CD8-positive, alpha-beta memory T cell (primary cell): ENCODE measurements at regions of chr2 and their contacts with region 1.

Region 1: GRCh38 chr2:128027801-128028667 is at the start of gene SAP130:
- DNase-seq: peak; percentile 98 to 99 (median 98)
- H3K4me3 ChIP-seq: peak within 1 kb of the TSS; percentile 72
- H3K4me3 Mint-ChIP-seq: peak within 1 kb of the TSS; percentile 92 to 98 (median 97)
- H3K27ac ChIP-seq: peak within 1 kb of the TSS; percentile 79
- H3K27ac Mint-ChIP-seq: peak within 1 kb of the TSS; percentile 91 to 97 (median 96)
- H3K4me1 ChIP-seq: peaks cover 13% of the 10 kb centered on the region
- H3K4me1 Mint-ChIP-seq: peaks cover 23 to 35% (median 25%) of the 10 kb centered on the region in 3 donors
- H3K27me3 ChIP-seq: no peaks in the 10 kb centered on the region
- H3K27me3 Mint-ChIP-seq: peaks cover 0 to 4% of the 10 kb centered on the region in 2 donors
- total RNA-seq, gene SAP130: 22.3 to 22.9 TPM

Region 2: DNA sequence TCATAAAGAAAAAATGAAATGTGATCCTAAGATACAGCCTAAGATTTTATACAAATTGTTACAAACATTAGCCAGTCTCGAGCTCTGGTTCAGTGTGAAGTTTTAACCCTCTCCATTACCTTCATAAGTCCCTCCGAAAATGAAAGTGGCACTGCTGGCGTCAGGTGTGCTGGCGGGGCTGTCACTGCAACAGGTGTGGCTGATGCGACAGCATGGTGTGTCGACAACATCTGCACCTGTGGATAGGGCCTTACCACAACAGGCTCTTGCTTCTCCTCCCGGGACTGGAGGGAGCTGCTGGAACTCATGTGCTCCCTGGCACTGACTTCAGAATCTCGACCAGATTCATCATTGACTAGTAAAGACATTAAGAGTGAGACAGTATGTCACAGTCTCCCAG is 10.5 kb before region 1 on chr2:
- CTCF ChIA-PET with region 1: interaction called, 4 read pairs
- POLR2A ChIA-PET with region 1: interaction called, 11 read pairs
- DNase-seq: no peak
- H3K4me3 ChIP-seq: no peak overlapping the region
- H3K4me3 Mint-ChIP-seq: no peak overlapping the region
- H3K27ac ChIP-seq: no peak overlapping the region
- H3K27ac Mint-ChIP-seq: no peak overlapping the region
- H3K4me1 ChIP-seq: no peaks in the 10 kb centered on the region
- H3K4me1 Mint-ChIP-seq: peaks cover 5 to 7% (median 6%) of the 10 kb centered on the region in 3 donors
- H3K27me3 ChIP-seq: no peaks in the 10 kb centered on the region
- H3K27me3 Mint-ChIP-seq: no peaks in the 10 kb centered on the region

Region 3: DNA sequence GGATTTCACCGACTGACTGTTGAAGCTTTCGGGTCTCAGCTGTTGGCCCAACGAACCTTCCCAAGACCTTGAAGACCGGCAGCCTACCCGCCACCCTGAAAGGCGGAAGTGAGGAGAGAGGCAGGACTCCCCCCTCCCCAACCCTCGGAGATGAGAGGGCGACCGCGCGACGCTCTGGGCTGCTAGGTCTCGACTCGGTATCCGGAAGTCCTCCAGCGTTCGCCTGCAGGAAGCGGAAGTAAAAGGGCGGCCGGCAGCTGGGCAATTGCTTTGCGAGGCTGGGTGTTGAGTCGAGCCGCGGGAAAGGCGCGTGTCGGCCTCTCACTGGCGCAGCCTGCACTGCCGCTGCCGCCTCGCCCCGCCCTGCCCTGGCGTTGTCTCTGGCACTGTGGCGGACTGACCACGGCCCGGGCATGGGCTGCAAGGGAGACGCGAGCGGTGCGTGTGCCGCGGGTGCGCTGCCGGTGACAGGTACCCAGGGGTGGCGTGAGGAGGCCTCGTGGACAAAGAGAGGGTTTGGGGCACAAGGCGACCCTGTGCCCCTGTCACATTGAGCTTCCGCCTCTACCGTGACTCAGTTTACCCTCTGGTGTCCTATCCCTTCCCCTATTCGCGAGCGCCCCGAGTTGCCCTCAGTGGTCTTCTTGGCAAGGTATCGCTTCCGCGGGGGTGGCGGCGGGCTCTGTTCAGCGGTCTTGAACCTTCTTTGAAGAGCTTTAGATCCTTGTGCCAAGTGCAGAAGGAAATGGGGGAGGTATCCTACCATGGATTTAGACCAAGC is 63.1 kb after region 1 on chr2 and contains the start of gene UGGT1:
- CTCF ChIA-PET with region 1: interaction called, 5 read pairs
- POLR2A ChIA-PET with region 1: interaction called, 27 read pairs
- DNase-seq: peak; percentile 88 to 95 (median 91)
- H3K4me3 ChIP-seq: peak within 1 kb of the TSS; percentile 97
- H3K4me3 Mint-ChIP-seq: peak within 1 kb of the TSS; percentile 85 to 98 (median 92)
- H3K27ac ChIP-seq: peak within 1 kb of the TSS; percentile 72
- H3K27ac Mint-ChIP-seq: peak within 1 kb of the TSS; percentile 91 to 97 (median 96)
- H3K4me1 ChIP-seq: peaks cover 26% of the 10 kb centered on the region
- H3K4me1 Mint-ChIP-seq: peaks cover 46 to 59% (median 58%) of the 10 kb centered on the region in 3 donors
- H3K27me3 ChIP-seq: no peaks in the 10 kb centered on the region
- H3K27me3 Mint-ChIP-seq: no peaks in the 10 kb centered on the region
- total RNA-seq, gene UGGT1: 54.0 to 55.8 TPM